ENCODE measurements at regions of chr11 and their contacts with region 1.

Region 1: GRCh38 chr11:14974515-14975251 is 2.5 kb upstream of the CALCA start:
- DNase-seq: peak; percentile 20
- ATAC-seq: peak; percentile 48
- H3K4me3 ChIP-seq: no peak overlapping the region
- H3K27ac ChIP-seq: no peak overlapping the region
- H3K4me1 ChIP-seq: no peaks in the 10 kb centered on the region
- H3K27me3 ChIP-seq: peaks cover 64% of the 10 kb centered on the region
- CTCF ChIP-seq: peak; percentile 42
- POLR2A ChIP-seq: no peak
- RAD21 ChIP-seq: peak; percentile 27; the same call in 1 of the 2 replicates

Region 2: GRCh38 chr11:14842002-14842401 is 132.7 kb before region 1 on chr11:
- CTCF ChIA-PET with region 1: no interaction called
- POLR2A ChIA-PET with region 1: no interaction called
- dilution Hi-C with region 1: no loop called
- in situ Hi-C with region 1: no loop called
- intact Hi-C with region 1: no loop called
- DNase-seq: no peak
- ATAC-seq: no peak
- H3K4me3 ChIP-seq: no peak overlapping the region
- H3K27ac ChIP-seq: no peak overlapping the region
- H3K4me1 ChIP-seq: no peaks in the 10 kb centered on the region
- H3K27me3 ChIP-seq: no peaks in the 10 kb centered on the region
- CTCF ChIP-seq: no peak
- POLR2A ChIP-seq: no peak
- RAD21 ChIP-seq: no peak

Region 3: GRCh38 chr11:14904745-14905103 is 70.0 kb before region 1 on chr11:
- CTCF ChIA-PET with region 1: no interaction called
- POLR2A ChIA-PET with region 1: no interaction called
- dilution Hi-C with region 1: no loop called
- in situ Hi-C with region 1: no loop called
- intact Hi-C with region 1: no loop called
- DNase-seq: peak; percentile 25
- ATAC-seq: peak; percentile 76
- H3K4me3 ChIP-seq: peak overlapping the region; percentile 40
- H3K27ac ChIP-seq: no peak overlapping the region
- H3K4me1 ChIP-seq: no peaks in the 10 kb centered on the region
- H3K27me3 ChIP-seq: no peaks in the 10 kb centered on the region; the same call in 1 of the 2 replicates
- CTCF ChIP-seq: peak; percentile 65
- POLR2A ChIP-seq: no peak
- RAD21 ChIP-seq: peak; percentile 39

Region 4: DNA sequence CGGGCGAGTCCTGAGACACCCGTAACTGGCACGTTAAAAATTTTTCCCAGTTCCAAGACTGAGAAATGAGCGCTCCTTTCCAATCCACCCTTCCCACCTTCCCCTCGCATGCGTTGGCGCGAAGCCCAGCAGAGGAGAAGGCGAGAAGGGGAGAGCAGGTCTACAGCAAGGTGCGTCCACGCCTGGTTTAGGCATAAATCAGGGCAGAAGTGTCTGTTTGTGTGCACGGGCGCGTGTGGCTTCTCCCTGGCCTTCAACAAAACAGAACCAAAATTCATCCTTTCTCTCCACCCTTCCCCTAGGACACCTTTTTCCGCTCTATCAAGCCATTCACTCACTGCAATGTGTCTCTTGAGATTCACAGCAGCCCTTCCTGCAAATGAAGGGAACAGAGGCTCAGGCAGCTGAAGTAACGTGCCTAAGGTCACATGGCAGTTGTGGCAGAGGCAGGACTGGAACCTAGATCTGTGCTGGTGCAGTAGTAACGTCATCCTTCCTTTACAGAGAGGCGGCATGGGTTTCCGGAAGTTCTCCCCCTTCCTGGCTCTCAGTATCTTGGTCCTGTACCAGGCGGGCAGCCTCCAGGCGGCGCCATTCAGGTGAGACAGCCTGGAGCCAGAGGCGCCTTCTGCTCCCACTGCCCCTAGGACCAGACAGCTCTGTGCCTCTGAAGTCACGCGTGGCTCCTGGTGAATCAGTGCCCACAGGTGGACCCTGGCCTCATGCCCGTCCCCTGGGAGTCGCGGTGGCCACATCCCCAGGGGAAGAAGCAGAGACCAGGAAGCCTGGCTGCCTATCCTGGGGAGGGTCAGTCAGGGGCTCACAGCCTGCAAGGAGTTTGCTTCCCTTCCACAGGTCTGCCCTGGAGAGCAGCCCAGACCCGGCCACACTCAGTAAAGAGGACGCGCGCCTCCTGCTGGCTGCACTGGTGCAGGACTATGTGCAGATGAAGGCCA is 99.8 kb after region 1 on chr11:
- CTCF ChIA-PET with region 1: interaction called, 3 read pairs
- POLR2A ChIA-PET with region 1: no interaction called
- dilution Hi-C with region 1: no loop called
- in situ Hi-C with region 1: no loop called
- intact Hi-C with region 1: loop called (anchors 2 kb)
- DNase-seq: peak; percentile 51
- ATAC-seq: peak; percentile 89
- H3K4me3 ChIP-seq: no peak overlapping the region; the same call in 1 of the 2 replicates
- H3K27ac ChIP-seq: no peak overlapping the region
- H3K4me1 ChIP-seq: peaks cover 4% of the 10 kb centered on the region; the same call in 1 of the 2 replicates
- H3K27me3 ChIP-seq: peaks cover 47% of the 10 kb centered on the region
- CTCF ChIP-seq: peak; percentile 64
- POLR2A ChIP-seq: no peak
- RAD21 ChIP-seq: peak; percentile 64

Region 5: GRCh38 chr11:15208378-15209222 is 233.9 kb after region 1 on chr11:
- CTCF ChIA-PET with region 1: interaction called, 3 read pairs
- POLR2A ChIA-PET with region 1: no interaction called
- dilution Hi-C with region 1: no loop called
- in situ Hi-C with region 1: no loop called
- intact Hi-C with region 1: loop called (anchors 2 kb)
- DNase-seq: peak; percentile 53
- ATAC-seq: peak; percentile 98
- H3K4me3 ChIP-seq: no peak overlapping the region
- H3K27ac ChIP-seq: no peak overlapping the region
- H3K4me1 ChIP-seq: no peaks in the 10 kb centered on the region
- H3K27me3 ChIP-seq: no peaks in the 10 kb centered on the region
- CTCF ChIP-seq: peak; percentile 95
- POLR2A ChIP-seq: peak; percentile 65
- RAD21 ChIP-seq: peak; percentile 99

Region 6: DNA sequence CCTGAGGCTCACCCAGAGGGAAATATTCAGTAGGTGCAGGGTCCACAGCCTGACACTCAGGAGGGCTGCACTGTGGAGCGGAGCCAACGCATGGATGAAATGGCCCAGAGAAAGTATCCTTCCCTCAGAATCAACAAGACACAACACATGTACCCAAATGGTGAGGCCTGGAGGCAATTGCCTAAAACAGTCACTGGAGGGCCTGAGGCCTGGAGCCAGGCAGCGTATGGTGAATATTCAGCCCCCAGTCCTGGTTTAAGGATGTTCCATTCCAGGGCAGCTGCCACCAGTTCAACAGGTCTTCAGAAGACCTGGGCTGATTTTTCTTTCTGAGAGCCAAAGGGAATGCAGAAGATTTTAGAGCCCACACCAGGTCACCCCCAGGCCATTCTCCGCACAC is 404.8 kb after region 1 on chr11:
- CTCF ChIA-PET with region 1: no interaction called
- POLR2A ChIA-PET with region 1: no interaction called
- dilution Hi-C with region 1: no loop called
- in situ Hi-C with region 1: no loop called
- intact Hi-C with region 1: no loop called
- DNase-seq: no peak
- ATAC-seq: no peak
- H3K4me3 ChIP-seq: no peak overlapping the region
- H3K27ac ChIP-seq: no peak overlapping the region
- H3K4me1 ChIP-seq: no peaks in the 10 kb centered on the region
- H3K27me3 ChIP-seq: no peaks in the 10 kb centered on the region
- CTCF ChIP-seq: no peak
- POLR2A ChIP-seq: no peak
- RAD21 ChIP-seq: no peak